ENCODE measurements at regions of chr2 and their contacts with region 1.

Region 1: DNA sequence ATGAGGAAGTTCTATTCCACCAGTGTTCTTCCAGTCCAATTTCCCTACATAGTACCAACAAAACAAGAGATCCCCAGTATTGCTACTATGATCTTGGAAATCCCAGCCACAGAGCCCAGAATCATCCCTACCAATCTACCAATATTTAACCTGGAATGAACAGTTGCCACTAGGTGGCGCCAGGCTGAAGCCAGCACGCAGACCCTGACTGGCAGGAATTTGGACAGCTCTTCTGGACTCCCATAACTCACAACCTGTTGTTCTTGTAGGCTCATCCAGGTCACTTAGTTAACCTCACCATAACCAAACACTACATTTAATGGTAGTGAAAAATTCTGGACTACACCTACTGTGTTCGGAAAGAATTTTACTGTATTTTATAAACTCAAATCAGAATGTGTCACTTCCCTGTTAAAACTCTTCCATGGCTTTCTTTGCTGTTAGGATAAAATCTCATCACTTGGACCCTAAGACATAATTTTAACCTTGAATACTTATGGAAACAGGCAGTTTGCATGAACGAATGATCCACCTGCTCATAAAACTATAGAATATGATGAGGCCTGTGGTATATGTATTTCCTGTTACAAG is 59.8 kb upstream of the SLC38A11 start:
- DNase-seq: peak; percentile 75
- ATAC-seq: peak; percentile 51
- H3K4me3 Mint-ChIP-seq: no peak overlapping the region
- H3K27ac Mint-ChIP-seq: no peak overlapping the region
- H3K4me1 Mint-ChIP-seq: peaks cover 8% of the 10 kb centered on the region
- H3K27me3 Mint-ChIP-seq: no peaks in the 10 kb centered on the region
- CTCF ChIP-seq: peak; percentile 76

Region 2: GRCh38 chr2:164841719-164842623 is 173.2 kb before region 1 on chr2 and contains the start of gene COBLL1:
- CTCF ChIA-PET with region 1: no interaction called
- POLR2A ChIA-PET with region 1: no interaction called
- DNase-seq: peak; percentile 94
- ATAC-seq: peak; percentile 79
- H3K4me3 Mint-ChIP-seq: peak within 1 kb of the TSS; percentile 84
- H3K27ac Mint-ChIP-seq: no peak within 1 kb of the TSS
- H3K4me1 Mint-ChIP-seq: peaks cover 19% of the 10 kb centered on the region
- H3K27me3 Mint-ChIP-seq: peaks cover 13% of the 10 kb centered on the region
- CTCF ChIP-seq: peak; percentile 70
- total RNA-seq, gene COBLL1: 4.4 to 6.3 TPM (median 5.8 TPM) in 3 replicates

Region 3: GRCh38 chr2:164992818-164993217 is 22.3 kb before region 1 on chr2:
- CTCF ChIA-PET with region 1: interaction called, 15 read pairs
- POLR2A ChIA-PET with region 1: no interaction called
- DNase-seq: peak; percentile 38
- ATAC-seq: peak; percentile 81
- H3K4me3 Mint-ChIP-seq: no peak overlapping the region
- H3K27ac Mint-ChIP-seq: no peak overlapping the region
- H3K4me1 Mint-ChIP-seq: peaks cover 12% of the 10 kb centered on the region
- H3K27me3 Mint-ChIP-seq: no peaks in the 10 kb centered on the region
- CTCF ChIP-seq: peak; percentile 59; the same call in 1 of the 2 replicates

Region 4: GRCh38 chr2:165067958-165068757 is 53.0 kb after region 1 on chr2:
- CTCF ChIA-PET with region 1: interaction called, 30 read pairs
- POLR2A ChIA-PET with region 1: interaction called, 3 read pairs
- DNase-seq: peak; percentile 79
- ATAC-seq: peak; percentile 97
- H3K4me3 Mint-ChIP-seq: peak overlapping the region; percentile 63
- H3K27ac Mint-ChIP-seq: peak overlapping the region; percentile 93
- H3K4me1 Mint-ChIP-seq: peaks cover 46% of the 10 kb centered on the region
- H3K27me3 Mint-ChIP-seq: no peaks in the 10 kb centered on the region
- CTCF ChIP-seq: no peak

Region 5: DNA sequence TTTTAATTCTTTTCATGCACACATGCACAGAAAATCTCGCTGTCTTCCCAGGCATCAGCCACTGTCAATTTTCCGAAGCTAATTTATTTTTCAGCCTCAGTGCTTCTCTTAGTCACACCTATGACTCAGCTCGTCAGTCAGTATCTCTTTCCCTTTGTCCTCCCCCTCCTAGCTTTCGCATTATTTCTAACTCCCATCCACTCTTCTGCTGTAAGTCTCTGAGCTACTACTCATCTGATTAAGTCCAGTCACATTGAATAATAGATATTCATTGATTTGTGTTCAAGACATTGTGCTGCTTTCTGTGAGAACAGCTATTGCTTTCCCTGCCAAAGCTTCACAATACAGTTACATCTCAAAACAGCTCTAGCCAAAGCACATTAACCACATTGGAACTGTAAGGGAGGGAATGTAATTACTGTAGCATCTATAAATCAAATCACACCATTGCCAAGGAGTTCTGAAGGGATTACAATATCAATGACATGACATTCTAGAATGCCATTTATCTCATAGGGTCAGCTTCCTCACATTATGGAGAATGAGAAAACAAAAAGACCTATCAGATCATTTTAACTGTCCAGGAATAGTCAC is 99.3 kb after region 1 on chr2:
- CTCF ChIA-PET with region 1: interaction called, 10 read pairs
- POLR2A ChIA-PET with region 1: interaction called, 3 read pairs
- DNase-seq: no peak
- ATAC-seq: no peak
- H3K4me3 Mint-ChIP-seq: no peak overlapping the region
- H3K27ac Mint-ChIP-seq: no peak overlapping the region
- H3K4me1 Mint-ChIP-seq: peaks cover 15% of the 10 kb centered on the region
- H3K27me3 Mint-ChIP-seq: no peaks in the 10 kb centered on the region
- CTCF ChIP-seq: no peak

Region 6: DNA sequence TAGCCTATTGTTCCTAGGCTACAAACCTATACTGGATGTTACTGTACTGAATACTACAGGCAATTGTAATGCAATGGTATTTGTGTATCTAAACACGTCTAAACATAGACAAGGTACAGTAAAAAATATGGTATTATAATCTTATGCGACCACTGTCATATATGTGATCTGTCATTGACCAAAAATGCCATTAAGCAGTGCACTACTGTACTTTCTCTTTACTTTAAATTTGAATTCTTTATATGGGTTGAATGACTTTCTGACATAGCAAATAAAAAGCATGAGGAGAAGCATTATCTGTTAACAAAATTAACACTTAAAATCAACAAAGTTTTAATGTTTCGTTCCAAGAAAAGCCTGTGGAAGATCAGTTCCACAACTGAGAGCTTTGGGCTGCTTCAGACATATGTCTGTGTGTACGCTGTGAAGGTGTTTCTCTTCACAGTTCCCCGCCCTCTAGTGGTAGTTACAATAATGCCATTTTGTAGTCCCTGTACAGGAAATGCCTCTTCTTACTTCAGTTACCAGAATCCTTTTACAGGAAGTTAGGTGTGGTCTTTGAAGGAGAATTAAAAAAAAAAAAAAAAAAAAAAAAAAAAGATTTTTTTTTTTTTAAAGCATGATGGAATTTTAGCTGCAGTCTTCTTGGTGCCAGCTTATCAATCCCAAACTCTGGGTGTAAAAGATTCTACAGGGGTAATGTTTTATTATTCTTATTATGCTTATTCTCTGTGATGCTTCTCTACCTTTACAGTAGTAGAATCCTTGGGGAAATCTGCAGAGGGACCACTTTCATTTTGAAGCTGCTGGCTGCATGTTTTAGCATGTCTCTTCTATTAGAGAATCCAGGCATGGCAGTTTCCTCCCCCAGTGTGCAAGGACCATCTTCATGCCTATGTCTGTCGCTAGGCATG is 278.6 kb after region 1 on chr2:
- CTCF ChIA-PET with region 1: interaction called, 20 read pairs
- POLR2A ChIA-PET with region 1: no interaction called
- DNase-seq: no peak
- ATAC-seq: peak; percentile 100
- H3K4me3 Mint-ChIP-seq: peak overlapping the region; percentile 67
- H3K27ac Mint-ChIP-seq: no peak overlapping the region
- H3K4me1 Mint-ChIP-seq: peaks cover 11% of the 10 kb centered on the region
- H3K27me3 Mint-ChIP-seq: no peaks in the 10 kb centered on the region
- CTCF ChIP-seq: peak; percentile 55; the same call in 1 of the 2 replicates